ENCODE measurements at regions of chr2 and their contacts with region 1.

Region 1: DNA sequence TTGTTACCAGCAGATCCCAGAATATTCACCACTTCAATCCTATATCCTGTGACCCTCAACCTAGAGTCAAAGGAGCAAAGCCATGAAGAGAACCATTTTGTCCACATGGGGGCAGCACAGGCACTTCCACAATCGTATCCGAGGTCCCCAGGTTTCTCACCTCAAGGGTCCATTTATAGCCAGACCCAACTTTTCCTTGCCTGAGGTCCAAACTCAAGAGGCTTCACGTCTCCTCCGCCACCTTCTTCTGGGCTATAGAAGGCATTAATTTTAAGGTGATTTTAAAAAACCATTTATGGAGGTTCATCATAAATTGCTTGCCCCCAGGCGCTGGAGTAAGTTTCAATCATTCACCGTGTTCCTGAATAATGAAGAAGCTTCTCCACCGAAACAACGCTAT is 111.6 kb upstream of the NABP1 start:
- ATAC-seq: peak in 4 of 8 experiments; percentile 42 to 85 (median 59)
- H3K4me3 ChIP-seq: no peak overlapping the region
- H3K27ac ChIP-seq: no peak overlapping the region
- H3K4me1 ChIP-seq: peaks cover 0 to 3% of the 10 kb centered on the region in 2 donors

Region 2: GRCh38 chr2:191677646-191678436 is 111.5 kb after region 1 on chr2 and contains the start of gene NABP1:
- in situ Hi-C with region 1: loop called in 2 of 9 experiments (anchors 10 to 25 kb)
- ATAC-seq: peak; percentile 79 to 94 (median 91)
- H3K4me3 ChIP-seq: peak within 1 kb of the TSS; percentile 52 to 81 (median 57)
- H3K27ac ChIP-seq: peak within 1 kb of the TSS; percentile 65 to 69
- H3K4me1 ChIP-seq: no peaks in the 10 kb centered on the region
- total RNA-seq, gene NABP1: 3.0 to 217 (median 8.8) TPM

Region 3: GRCh38 chr2:191691016-191691735 is 124.8 kb after region 1 on chr2:
- in situ Hi-C with region 1: loop called in 3 of 9 experiments (anchors 10 to 25 kb)
- ATAC-seq: peak in 5 of 8 experiments; percentile 8 to 75 (median 31)
- H3K4me3 ChIP-seq: no peak overlapping the region
- H3K27ac ChIP-seq: no peak overlapping the region
- H3K4me1 ChIP-seq: no peaks in the 10 kb centered on the region

Region 4: GRCh38 chr2:191724015-191724414 is 157.7 kb after region 1 on chr2:
- in situ Hi-C with region 1: no loop called
- ATAC-seq: no peak
- H3K4me3 ChIP-seq: no peak overlapping the region
- H3K27ac ChIP-seq: no peak overlapping the region
- H3K4me1 ChIP-seq: peaks cover 0 to 10% of the 10 kb centered on the region in 2 donors

Region 5: GRCh38 chr2:192254444-192254843 is 688.1 kb after region 1 on chr2:
- in situ Hi-C with region 1: no loop called
- ATAC-seq: no peak
- H3K4me3 ChIP-seq: no peak overlapping the region
- H3K27ac ChIP-seq: no peak overlapping the region
- H3K4me1 ChIP-seq: no peaks in the 10 kb centered on the region